Activated naive CD8-positive, alpha-beta T cell treated with anti-CD3 and anti-CD28 coated beads, Interleukin-2, amount 10 ng/mL, durations not matched to agents 7 days and 5 days (primary cell): ENCODE measurements at regions of chr3 and their contacts with region 1.

Region 1: GRCh38 chr3:138186803-138187295 is 252 bp upstream of the ARMC8 start:
- DNase-seq: peak; percentile 91
- ATAC-seq: peak; percentile 44
- H3K4me3 Mint-ChIP-seq: peak overlapping the region; percentile 96
- H3K27ac Mint-ChIP-seq: peak overlapping the region; percentile 98
- H3K4me1 Mint-ChIP-seq: peaks cover 33% of the 10 kb centered on the region
- H3K27me3 Mint-ChIP-seq: peaks cover 18% of the 10 kb centered on the region

Region 2: GRCh38 chr3:138148503-138148902 is 38.3 kb before region 1 on chr3:
- POLR2A ChIA-PET with region 1: no interaction called
- DNase-seq: no peak
- ATAC-seq: no peak
- H3K4me3 Mint-ChIP-seq: no peak overlapping the region
- H3K27ac Mint-ChIP-seq: no peak overlapping the region
- H3K4me1 Mint-ChIP-seq: no peaks in the 10 kb centered on the region
- H3K27me3 Mint-ChIP-seq: peaks cover 27% of the 10 kb centered on the region

Region 3: DNA sequence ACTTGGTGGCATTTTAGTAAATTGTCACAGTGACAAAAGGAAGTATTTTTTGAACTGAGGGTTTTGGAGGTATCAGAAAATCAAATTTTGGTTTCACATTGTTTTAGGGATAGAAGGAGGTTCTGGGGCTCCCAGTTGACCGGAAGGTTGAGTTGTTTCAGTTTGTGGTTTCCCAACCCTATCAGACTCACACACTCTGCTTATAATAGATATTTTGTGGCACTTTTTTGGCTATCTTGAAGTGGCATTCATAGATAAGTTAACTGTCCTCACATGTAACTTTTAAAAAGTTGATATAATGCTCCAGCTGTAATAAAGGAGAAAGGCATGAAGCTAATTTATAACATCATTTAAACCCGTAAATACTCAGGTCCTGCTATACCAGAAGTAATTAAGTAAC is 13.0 kb after region 1 on chr3:
- POLR2A ChIA-PET with region 1: no interaction called
- DNase-seq: no peak
- ATAC-seq: no peak
- H3K4me3 Mint-ChIP-seq: no peak overlapping the region
- H3K27ac Mint-ChIP-seq: no peak overlapping the region
- H3K4me1 Mint-ChIP-seq: peaks cover 27% of the 10 kb centered on the region
- H3K27me3 Mint-ChIP-seq: no peaks in the 10 kb centered on the region

Region 4: GRCh38 chr3:138213398-138214085 is 26.7 kb after region 1 on chr3:
- POLR2A ChIA-PET with region 1: no interaction called
- DNase-seq: no peak
- ATAC-seq: no peak
- H3K4me3 Mint-ChIP-seq: no peak overlapping the region
- H3K27ac Mint-ChIP-seq: no peak overlapping the region
- H3K4me1 Mint-ChIP-seq: peaks cover 8% of the 10 kb centered on the region
- H3K27me3 Mint-ChIP-seq: no peaks in the 10 kb centered on the region

Region 5: DNA sequence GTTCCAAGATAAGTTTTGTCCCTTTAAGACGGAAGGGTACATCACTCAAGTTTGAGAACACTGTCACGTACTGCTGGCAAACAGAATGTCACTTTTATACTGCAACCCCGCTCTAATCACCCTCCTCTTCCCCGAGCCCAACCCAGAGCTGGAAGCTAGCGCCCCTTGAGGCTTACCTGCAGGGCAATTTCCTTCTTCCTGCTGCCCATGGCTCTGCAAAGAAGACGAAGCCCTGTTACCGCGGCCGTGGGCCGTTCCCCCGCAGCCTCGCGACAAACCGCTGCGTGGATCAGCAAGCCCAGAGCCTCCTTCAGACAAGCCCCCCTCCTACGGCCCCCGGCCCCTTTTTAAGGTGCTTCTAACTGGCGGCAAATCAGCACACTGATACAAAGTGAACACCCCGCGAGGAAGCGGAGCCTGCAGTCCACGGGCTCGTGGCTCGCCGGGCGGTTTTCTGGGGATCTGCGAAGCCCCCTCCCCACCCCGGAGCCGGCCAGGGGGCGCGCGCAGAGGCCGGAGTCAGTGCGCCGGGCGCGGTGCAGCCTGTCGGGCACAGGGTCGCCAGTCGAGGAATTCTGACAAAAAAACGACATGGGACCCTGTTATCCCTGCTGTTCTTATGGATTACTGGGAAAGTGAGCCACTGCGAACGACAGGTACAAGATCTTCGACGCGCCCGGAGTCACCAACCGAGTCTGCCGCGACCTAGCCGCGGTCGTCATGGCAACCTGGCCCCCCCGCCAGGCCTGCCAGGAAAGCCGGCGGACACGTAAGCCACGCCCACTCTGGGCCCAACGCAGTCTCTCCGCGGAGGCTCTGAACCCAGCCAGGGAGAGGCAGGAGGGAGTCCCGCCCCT is 142.5 kb after region 1 on chr3 and contains the start of gene NME9:
- POLR2A ChIA-PET with region 1: interaction called, 14 read pairs
- DNase-seq: peak; percentile 89
- ATAC-seq: peak; percentile 88
- H3K4me3 Mint-ChIP-seq: peak within 1 kb of the TSS; percentile 90
- H3K27ac Mint-ChIP-seq: peak within 1 kb of the TSS; percentile 83
- H3K4me1 Mint-ChIP-seq: peaks cover 30% of the 10 kb centered on the region
- H3K27me3 Mint-ChIP-seq: peaks cover 3% of the 10 kb centered on the region
- total RNA-seq, gene NME9: 0.57 to 1.7 TPM